Activated T-helper 2 cell treated with anti-CD3 and anti-CD28 coated beads, Interferon-gamma antibody, Interleukin-2, Interleukin-4, amounts not matched to agents 10 μg/mL and 5 μg/mL and 100 μg/mL, durations not matched to agents 14 hours and 24 hours and 36 hours (primary cell): ENCODE measurements at regions of chr2 and their contacts with region 1.

Region 1: GRCh38 chr2:143110758-143111428 is 18.3 kb upstream of the ARHGAP15 start:
- DNase-seq: peak; percentile 46
- H3K4me3 Mint-ChIP-seq: no peak overlapping the region
- H3K27ac Mint-ChIP-seq: peak overlapping the region; percentile 64
- H3K4me1 Mint-ChIP-seq: peaks cover 39% of the 10 kb centered on the region
- H3K27me3 Mint-ChIP-seq: peaks cover 8% of the 10 kb centered on the region

Region 2: DNA sequence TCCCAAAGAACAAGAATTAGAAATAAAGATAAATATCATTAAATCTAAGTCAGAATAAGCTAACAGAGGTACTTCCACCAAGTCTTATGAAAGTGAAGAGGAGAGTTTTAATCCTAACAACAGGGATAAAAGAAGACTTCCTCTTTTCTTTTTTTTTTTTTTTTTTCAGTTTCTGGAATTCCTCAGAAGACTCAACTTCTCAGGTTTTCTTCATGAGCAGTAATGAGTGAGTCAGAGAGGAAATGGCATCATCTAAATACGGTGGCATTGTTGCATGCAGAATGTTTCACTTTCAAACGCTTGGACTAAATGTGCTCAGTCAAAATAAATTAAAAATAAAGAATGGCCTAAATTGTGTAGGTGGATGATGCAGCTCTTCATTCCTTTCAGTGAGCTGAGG is 27.3 kb before region 1 on chr2:
- intact Hi-C with region 1: loop called (anchors 2 kb)
- DNase-seq: no peak
- H3K4me3 Mint-ChIP-seq: no peak overlapping the region
- H3K27ac Mint-ChIP-seq: peak overlapping the region; percentile 22
- H3K4me1 Mint-ChIP-seq: peaks cover 34% of the 10 kb centered on the region
- H3K27me3 Mint-ChIP-seq: peaks cover 6% of the 10 kb centered on the region

Region 3: GRCh38 chr2:143193121-143193520 is 82.2 kb after region 1 on chr2:
- intact Hi-C with region 1: no loop called
- DNase-seq: no peak
- H3K4me3 Mint-ChIP-seq: no peak overlapping the region
- H3K27ac Mint-ChIP-seq: no peak overlapping the region
- H3K4me1 Mint-ChIP-seq: no peaks in the 10 kb centered on the region
- H3K27me3 Mint-ChIP-seq: no peaks in the 10 kb centered on the region

Region 4: GRCh38 chr2:143217512-143218115 is 106.7 kb after region 1 on chr2:
- intact Hi-C with region 1: loop called (anchors 1 kb)
- DNase-seq: no peak
- H3K4me3 Mint-ChIP-seq: no peak overlapping the region
- H3K27ac Mint-ChIP-seq: peak overlapping the region; percentile 80
- H3K4me1 Mint-ChIP-seq: peaks cover 34% of the 10 kb centered on the region
- H3K27me3 Mint-ChIP-seq: no peaks in the 10 kb centered on the region

Region 5: GRCh38 chr2:143334719-143335236 is 223.9 kb after region 1 on chr2:
- intact Hi-C with region 1: no loop called
- DNase-seq: no peak
- H3K4me3 Mint-ChIP-seq: no peak overlapping the region
- H3K27ac Mint-ChIP-seq: no peak overlapping the region
- H3K4me1 Mint-ChIP-seq: peaks cover 9% of the 10 kb centered on the region
- H3K27me3 Mint-ChIP-seq: no peaks in the 10 kb centered on the region